HEK293 (cell line): ENCODE measurements at regions of chr18 and their contacts with region 1.

Region 1: DNA sequence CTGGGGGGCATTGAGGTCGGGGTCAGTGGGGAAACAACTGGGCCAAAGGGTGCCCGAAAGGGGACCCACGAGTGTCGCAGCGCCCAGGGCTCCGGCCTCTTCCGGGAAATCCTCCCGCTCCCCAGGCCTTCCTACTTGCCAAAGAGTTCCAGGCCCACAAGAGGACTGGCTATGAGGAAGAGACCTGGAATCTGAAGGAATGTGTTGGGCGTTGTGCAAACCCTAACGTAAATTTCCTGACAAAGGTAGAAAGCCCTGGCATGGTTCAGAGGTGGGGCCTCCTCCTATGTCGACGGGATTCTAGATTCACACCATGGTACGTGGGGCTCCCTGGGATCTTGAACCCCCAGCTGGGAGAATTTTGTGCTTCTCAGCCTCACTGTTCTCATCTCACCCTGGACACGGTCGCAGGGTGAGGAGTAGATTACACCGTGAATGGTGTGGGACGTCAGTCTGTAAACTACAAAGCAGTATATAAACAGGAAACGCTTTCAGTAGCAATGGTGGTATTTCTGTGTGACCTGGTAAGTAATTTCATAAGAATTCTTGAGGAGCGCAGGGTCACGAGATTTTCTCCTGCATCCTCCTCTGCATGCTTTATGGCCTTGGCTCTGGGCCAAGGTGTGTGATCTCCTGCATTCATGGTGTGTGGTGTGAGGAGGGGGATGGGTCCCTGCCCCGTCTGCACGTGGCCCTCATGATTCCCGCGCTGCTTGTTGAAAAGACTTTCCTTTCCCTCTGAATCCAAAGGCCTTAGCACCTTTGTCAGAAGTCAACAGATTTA is 868 bp downstream of the HSBP1L1 start:
- H3K4me3 ChIP-seq: peak overlapping the region; percentile 52
- H3K27ac ChIP-seq: peak overlapping the region; percentile 72
- H3K4me1 ChIP-seq: peaks cover 13% of the 10 kb centered on the region
- CTCF ChIP-seq: no peak

Region 2: GRCh38 chr18:79912409-79912991 is 52.8 kb before region 1 on chr18:
- CTCF ChIA-PET with region 1: no interaction called
- POLR2A ChIA-PET with region 1: no interaction called
- H3K4me3 ChIP-seq: no peak overlapping the region
- H3K27ac ChIP-seq: no peak overlapping the region
- H3K4me1 ChIP-seq: no peaks in the 10 kb centered on the region
- CTCF ChIP-seq: no peak

Region 3: GRCh38 chr18:79982734-79983133 is 17.4 kb after region 1 on chr18:
- CTCF ChIA-PET with region 1: interaction called, 10 read pairs
- POLR2A ChIA-PET with region 1: interaction called, 4 read pairs
- H3K4me3 ChIP-seq: no peak overlapping the region
- H3K27ac ChIP-seq: no peak overlapping the region
- H3K4me1 ChIP-seq: peaks cover 14% of the 10 kb centered on the region
- CTCF ChIP-seq: no peak